ENCODE measurements at regions of chr12 and their contacts with region 1.

Region 1: DNA sequence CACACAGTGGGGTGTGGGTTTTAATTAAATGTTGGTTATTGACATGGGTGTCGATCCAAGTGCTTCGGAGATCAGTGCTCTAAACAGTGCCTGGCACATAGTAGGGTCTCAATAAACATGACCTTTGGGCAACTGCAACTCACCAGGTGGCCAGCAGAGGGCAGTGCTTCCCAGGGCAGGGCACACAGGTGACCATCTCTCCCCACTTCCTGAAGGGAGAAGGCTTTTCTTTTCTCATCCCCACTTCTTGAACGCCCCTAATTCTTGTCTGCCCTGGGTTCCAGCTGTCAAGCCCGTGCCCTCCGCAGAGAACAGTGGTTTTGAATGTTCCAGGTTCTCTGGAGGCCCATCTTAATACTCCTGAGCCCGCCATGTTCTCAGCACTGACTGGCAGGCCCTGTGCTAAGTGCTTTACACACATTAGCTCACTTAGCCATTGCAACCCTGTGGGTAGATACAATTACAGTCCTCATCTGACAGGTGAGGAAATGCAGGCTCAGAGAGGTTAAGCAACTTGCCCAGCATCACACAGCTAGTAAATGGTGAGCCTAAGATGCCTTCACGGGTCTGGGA is 16.3 kb downstream of the RAPGEF3 start:
- DNase-seq: peak; percentile 61
- H3K4me3 Mint-ChIP-seq: no peak overlapping the region
- H3K27ac Mint-ChIP-seq: no peak overlapping the region
- H3K4me1 Mint-ChIP-seq: peaks cover 6% of the 10 kb centered on the region
- H3K27me3 Mint-ChIP-seq: peaks cover 17% of the 10 kb centered on the region

Region 2: GRCh38 chr12:47753034-47754001 is 11.0 kb after region 1 on chr12:
- intact Hi-C with region 1: loop called (anchors 1 kb)
- DNase-seq: no peak
- H3K4me3 Mint-ChIP-seq: no peak overlapping the region
- H3K27ac Mint-ChIP-seq: peak overlapping the region; percentile 55
- H3K4me1 Mint-ChIP-seq: peaks cover 45% of the 10 kb centered on the region
- H3K27me3 Mint-ChIP-seq: no peaks in the 10 kb centered on the region

Region 3: DNA sequence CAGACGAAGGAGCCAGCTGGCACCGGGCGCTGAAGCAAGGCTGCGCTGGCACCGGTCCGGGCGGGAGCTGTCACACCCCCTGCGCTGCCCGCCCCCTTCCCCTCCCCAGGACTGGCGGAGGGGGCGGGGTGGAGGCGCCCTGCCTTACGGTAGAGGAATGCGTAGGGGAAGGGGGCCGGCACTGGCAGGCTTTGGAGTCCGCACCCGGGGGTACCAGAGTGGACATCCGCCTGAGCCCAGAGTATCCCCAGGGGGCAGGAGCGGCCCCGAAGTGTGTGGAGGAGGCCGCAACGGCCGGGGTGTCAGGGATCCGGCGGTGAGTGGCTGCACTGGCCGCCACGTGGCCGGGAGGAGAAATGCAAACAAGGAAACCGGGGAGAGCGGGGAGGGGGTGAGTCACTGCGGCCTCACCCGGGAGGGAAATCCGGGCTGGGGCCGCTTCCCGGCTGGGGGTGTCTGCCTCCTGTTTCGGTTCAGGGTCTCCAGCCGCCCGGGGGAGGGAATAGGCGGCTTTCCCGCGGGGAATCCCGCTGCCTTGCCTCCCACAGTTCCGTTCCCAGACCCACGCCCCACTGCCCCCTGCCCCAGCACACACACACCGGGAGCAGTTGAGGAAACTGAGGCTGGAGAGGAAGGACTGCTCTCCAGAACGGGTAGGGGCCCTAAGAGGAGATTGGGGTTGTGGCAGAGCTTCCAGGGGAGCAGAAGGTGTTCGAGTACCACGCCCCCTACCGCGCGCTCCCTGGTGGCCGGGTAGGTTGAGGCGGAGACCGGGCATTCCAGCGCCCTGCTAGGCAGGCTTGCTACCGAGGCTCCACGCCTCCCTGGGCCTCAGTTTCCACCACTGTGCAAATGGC is 16.7 kb after region 1 on chr12 and contains the start of gene RAPGEF3:
- intact Hi-C with region 1: loop called (anchors 1 kb)
- DNase-seq: peak; percentile 58
- H3K4me3 Mint-ChIP-seq: peak within 1 kb of the TSS; percentile 75
- H3K27ac Mint-ChIP-seq: no peak within 1 kb of the TSS
- H3K4me1 Mint-ChIP-seq: peaks cover 56% of the 10 kb centered on the region
- H3K27me3 Mint-ChIP-seq: peaks cover 4% of the 10 kb centered on the region
- total RNA-seq, gene RAPGEF3: 4.7 and 6.5 TPM in 2 replicates

Region 4: GRCh38 chr12:47767216-47767724 is 24.9 kb after region 1 on chr12:
- intact Hi-C with region 1: loop called (anchors 1 kb)
- DNase-seq: peak; percentile 53
- H3K4me3 Mint-ChIP-seq: no peak overlapping the region
- H3K27ac Mint-ChIP-seq: no peak overlapping the region
- H3K4me1 Mint-ChIP-seq: peaks cover 3% of the 10 kb centered on the region
- H3K27me3 Mint-ChIP-seq: peaks cover 3% of the 10 kb centered on the region

Region 5: GRCh38 chr12:47779301-47779942 is 37.1 kb after region 1 on chr12:
- intact Hi-C with region 1: loop called (anchors 1 kb)
- DNase-seq: peak; percentile 84
- H3K4me3 Mint-ChIP-seq: no peak overlapping the region
- H3K27ac Mint-ChIP-seq: peak overlapping the region; percentile 89
- H3K4me1 Mint-ChIP-seq: peaks cover 50% of the 10 kb centered on the region
- H3K27me3 Mint-ChIP-seq: no peaks in the 10 kb centered on the region

Region 6: DNA sequence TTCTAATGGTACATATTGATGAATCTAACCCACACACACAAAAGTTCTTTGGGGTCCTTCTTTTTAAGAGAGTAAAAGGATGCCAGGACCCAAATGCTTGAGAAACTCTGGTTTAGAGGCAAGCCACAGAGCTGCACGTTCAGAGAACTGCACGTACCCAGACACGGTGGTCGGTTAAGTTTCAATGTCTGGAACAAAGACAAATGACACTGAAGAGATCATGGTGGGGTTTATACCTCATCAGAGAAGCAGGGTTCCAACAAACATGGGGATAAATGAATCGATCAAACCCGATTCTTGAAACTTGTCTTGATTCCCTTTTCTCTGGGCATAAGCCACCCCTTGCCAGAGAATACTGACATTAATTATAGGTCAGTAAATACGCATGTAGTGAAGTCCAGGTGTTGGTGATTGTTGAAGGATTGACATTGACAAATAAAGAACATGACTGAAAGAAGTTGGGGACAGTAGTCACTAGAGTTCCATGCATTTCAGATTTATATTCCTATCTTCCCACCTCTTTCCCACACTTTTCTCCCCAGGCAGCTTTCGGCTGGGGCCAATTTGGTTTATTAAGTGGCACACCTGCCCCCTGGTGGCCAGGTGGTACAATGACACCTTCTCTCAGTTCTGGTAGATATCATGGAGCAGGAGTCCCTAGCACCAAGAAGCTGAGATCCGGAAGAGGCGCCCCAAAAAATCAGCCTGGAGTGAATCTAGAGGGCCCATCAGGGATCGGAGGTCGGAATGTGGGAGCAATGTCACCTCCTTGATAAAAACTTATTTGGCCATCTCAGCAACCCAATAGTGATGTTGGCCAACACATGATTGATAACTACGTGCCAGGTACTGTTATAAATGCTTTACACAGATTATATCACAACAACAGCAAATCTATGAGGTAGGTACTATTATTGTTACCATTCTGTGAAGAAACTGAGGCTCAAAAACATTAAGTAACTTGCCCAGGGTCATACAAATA is 95.1 kb after region 1 on chr12:
- intact Hi-C with region 1: loop called (anchors 1 kb)
- DNase-seq: peak; percentile 41
- H3K4me3 Mint-ChIP-seq: no peak overlapping the region
- H3K27ac Mint-ChIP-seq: peak overlapping the region; percentile 67
- H3K4me1 Mint-ChIP-seq: peaks cover 84% of the 10 kb centered on the region
- H3K27me3 Mint-ChIP-seq: no peaks in the 10 kb centered on the region

Region 7: DNA sequence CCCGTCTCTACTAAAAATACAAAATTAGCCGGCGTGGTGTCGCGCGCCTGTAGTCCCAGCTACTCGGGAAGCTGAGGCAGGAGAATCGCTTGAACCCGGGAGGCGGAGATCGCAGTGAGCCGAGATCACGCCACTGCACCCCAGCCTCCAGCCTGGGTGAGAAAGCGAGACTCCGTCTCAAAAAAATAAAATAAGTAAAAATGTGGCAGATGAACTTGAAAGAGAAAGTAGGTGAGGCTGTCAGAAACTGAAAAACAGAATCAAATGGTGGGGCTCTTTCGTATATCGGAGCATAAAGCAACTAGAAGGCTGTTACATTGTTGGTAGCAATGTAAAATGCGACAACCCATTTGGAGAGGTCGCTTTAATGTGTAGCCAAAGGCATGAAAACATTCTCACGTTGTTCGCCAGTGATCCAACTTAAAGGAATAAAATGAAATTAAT is 974.9 kb after region 1 on chr12:
- intact Hi-C with region 1: no loop called
- DNase-seq: no peak
- H3K4me3 Mint-ChIP-seq: peak overlapping the region; percentile 90
- H3K27ac Mint-ChIP-seq: peak overlapping the region; percentile 93
- H3K4me1 Mint-ChIP-seq: peaks cover 43% of the 10 kb centered on the region
- H3K27me3 Mint-ChIP-seq: no peaks in the 10 kb centered on the region

Measured in activated T-helper 1 cell treated with anti-CD3 and anti-CD28 coated beads, Interleukin-12 subunit alpha, Interleukin-12 subunit beta, Interleukin-2, Interleukin-4 antibody, amounts not matched to agents 30 ng/mL and 10 ng/mL and 1 ng/mL, durations not matched to agents 14 hours and 24 hours and 36 hours (primary cell).